ENCODE measurements at regions of chr11 and their contacts with region 1.

Region 1: DNA sequence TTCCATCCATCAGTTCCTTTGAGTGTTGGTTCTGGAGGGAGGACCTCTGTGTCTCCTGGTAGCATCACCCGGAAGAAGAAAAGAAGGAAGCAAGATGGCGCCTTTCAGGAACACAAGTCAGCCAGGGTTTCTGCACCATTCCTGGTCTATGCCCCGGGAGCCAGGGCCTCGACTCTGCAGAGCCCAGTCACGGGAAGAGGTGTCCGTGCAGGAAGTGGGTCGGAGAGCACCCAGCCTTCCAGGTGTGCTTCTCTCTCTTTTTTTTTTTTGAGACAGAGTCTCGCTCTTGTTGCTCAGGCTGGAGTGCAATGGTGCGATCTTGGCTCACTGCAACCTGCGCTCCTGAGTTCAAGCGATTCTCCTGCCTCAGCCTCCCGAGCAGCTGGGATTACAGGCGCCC is 21.2 kb downstream of the MRPL21 start:
- DNase-seq: no peak
- ATAC-seq: no peak
- H3K4me3 ChIP-seq: no peak overlapping the region
- H3K4me3 Mint-ChIP-seq: no peak overlapping the region
- H3K27ac ChIP-seq: no peak overlapping the region
- H3K27ac Mint-ChIP-seq: no peak overlapping the region
- H3K4me1 ChIP-seq: no peaks in the 10 kb centered on the region
- H3K4me1 Mint-ChIP-seq: no peaks in the 10 kb centered on the region
- H3K27me3 ChIP-seq: no peaks in the 10 kb centered on the region
- H3K27me3 Mint-ChIP-seq: no peaks in the 10 kb centered on the region

Region 2: GRCh38 chr11:68266121-68266891 is 616.1 kb before region 1 on chr11:
- CTCF ChIA-PET with region 1: no interaction called
- POLR2A ChIA-PET with region 1: no interaction called
- intact Hi-C with region 1: loop called in 1 of 2 experiments (anchors 5 kb)
- DNase-seq: no peak
- ATAC-seq: no peak
- H3K4me3 ChIP-seq: no peak overlapping the region
- H3K4me3 Mint-ChIP-seq: no peak overlapping the region
- H3K27ac ChIP-seq: no peak overlapping the region
- H3K27ac Mint-ChIP-seq: no peak overlapping the region
- H3K4me1 ChIP-seq: peaks cover 5 to 8% of the 10 kb centered on the region in 2 donors
- H3K4me1 Mint-ChIP-seq: peaks cover 16 to 39% (median 28%) of the 10 kb centered on the region in 7 donors
- H3K27me3 ChIP-seq: no peaks in the 10 kb centered on the region
- H3K27me3 Mint-ChIP-seq: no peaks in the 10 kb centered on the region

Measured in naive thymus-derived CD4-positive, alpha-beta T cell (primary cell).